MCF 10A (cell line): ENCODE measurements at regions of chr5 and their contacts with region 1.

Region 1: GRCh38 chr5:124583469-124584350 is 162.7 kb downstream of the ZNF608 start:
- DNase-seq: peak; percentile 85
- H3K4me3 Mint-ChIP-seq: no peak overlapping the region
- H3K27ac Mint-ChIP-seq: no peak overlapping the region
- H3K4me1 Mint-ChIP-seq: peaks cover 14% of the 10 kb centered on the region
- H3K27me3 Mint-ChIP-seq: no peaks in the 10 kb centered on the region
- CTCF ChIP-seq: no peak

Region 2: DNA sequence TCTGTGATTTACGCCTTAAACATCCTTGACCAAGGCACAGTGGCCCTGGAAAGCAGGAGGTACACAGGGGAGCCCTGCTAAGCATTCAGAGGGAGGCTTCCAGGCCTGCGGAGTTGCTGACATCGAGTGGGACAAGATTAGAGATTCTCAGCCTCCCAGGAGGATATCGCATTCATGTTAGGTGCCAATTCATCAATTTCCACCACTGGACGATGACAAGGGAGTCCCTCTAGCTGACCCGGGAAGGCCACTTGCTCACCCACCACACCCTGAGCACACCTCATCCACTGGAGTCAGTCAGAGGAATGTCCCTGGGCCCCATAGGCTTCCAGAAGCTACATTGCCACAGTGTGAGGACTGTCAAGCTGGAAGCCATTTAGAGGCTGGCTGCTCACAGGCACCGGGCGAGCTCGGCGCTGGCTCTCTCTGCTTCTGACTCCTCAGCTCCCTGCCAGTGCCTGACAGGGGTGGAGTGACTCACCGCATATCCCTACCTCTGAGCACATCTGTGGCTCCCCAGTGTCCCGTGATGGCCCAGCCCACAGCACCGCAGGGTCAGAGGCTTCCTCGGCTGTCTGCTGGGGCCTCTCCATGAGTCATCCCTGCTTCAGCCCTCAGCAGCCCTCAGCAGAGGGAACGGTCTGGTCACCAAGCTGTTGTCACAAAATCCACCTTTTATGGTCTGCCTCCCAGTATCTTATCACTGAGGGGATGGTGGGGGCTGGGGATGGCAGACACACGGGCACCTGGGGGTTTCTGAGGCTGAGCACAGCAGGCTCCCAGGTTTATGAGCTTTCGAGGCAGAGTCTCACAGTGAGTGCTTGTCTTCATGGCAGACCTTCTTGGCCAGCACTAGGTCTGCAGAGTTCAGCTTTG is 45.2 kb after region 1 on chr5:
- CTCF ChIA-PET with region 1: no interaction called
- POLR2A ChIA-PET with region 1: no interaction called
- intact Hi-C with region 1: loop called (anchors 1 kb)
- DNase-seq: peak; percentile 98
- H3K4me3 Mint-ChIP-seq: peak overlapping the region; percentile 29
- H3K27ac Mint-ChIP-seq: peak overlapping the region; percentile 75
- H3K4me1 Mint-ChIP-seq: peaks cover 34% of the 10 kb centered on the region
- H3K27me3 Mint-ChIP-seq: no peaks in the 10 kb centered on the region
- CTCF ChIP-seq: no peak